Tibial artery (tissue), 4 donors: ENCODE measurements at regions of chr15 and their contacts with region 1.

Region 1: GRCh38 chr15:71114896-71115554 is at the start of gene THSD4:
- DNase-seq: peak; percentile 52 to 80
- H3K4me3 ChIP-seq: peak within 1 kb of the TSS; percentile 66 to 70
- H3K27ac ChIP-seq: peak within 1 kb of the TSS; percentile 83 to 84
- H3K4me1 ChIP-seq: peaks cover 0 to 27% (median 8%) of the 10 kb centered on the region in 4 donors
- H3K27me3 ChIP-seq: no peaks in the 10 kb centered on the region
- CTCF ChIP-seq: peak; percentile 98

Region 2: DNA sequence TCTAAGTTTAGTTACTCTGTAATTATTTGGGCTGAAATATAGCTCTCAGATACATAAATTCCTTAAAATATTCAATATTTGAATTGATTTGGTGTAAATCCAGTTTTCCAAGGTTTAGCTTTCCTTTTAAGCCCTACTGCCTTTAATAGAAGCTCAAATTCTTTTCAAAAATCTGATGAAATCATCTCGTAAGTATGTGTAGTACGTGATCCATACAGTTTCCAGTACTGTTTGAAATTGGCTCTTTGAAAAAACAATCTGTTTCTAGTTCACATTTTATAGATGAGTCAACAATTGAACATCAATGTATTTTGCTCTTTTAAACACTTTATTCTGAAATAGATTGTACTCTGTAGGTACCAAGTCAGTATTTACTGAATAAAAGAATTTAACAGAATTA is 138.2 kb before region 1 on chr15:
- intact Hi-C with region 1: no loop called
- DNase-seq: no peak
- H3K4me3 ChIP-seq: no peak overlapping the region
- H3K27ac ChIP-seq: no peak overlapping the region
- H3K4me1 ChIP-seq: peaks cover 0 to 10% (median 2%) of the 10 kb centered on the region in 4 donors
- H3K27me3 ChIP-seq: no peaks in the 10 kb centered on the region
- CTCF ChIP-seq: no peak

Region 3: DNA sequence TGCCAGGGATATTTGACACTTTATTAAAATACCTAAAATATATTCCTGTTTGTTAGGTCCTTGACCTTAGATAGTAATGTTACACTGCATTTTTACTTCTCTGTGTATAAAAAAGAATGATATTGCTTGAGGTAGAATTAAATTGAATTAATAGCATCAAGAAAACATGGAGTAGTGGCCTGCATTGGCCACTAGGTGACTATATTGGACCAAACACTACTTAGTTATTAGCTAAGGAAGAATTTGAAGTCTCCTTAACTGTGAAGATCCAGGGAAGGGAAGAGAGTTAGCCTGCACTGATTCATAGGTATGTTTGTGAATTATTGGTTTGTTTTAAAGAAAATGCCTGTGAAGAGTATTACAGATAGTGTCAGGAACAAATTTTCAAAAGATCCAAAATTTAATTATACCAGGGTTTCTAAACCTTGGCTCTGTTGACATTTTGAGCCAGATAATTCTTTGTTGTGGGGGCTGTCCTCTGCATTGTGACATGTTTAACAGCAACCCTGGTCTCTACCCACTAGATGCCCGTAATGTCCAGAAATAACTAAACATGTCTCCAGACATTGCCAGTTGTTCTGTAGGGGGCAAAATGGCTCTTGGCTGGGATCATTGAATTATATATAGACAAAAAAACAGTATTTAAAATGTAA is 103.4 kb before region 1 on chr15:
- intact Hi-C with region 1: loop called (anchors 10 kb)
- DNase-seq: no peak
- H3K4me3 ChIP-seq: no peak overlapping the region
- H3K27ac ChIP-seq: no peak overlapping the region
- H3K4me1 ChIP-seq: no peaks in the 10 kb centered on the region
- H3K27me3 ChIP-seq: no peaks in the 10 kb centered on the region
- CTCF ChIP-seq: peak; percentile 80 to 81

Region 4: GRCh38 chr15:71435552-71435951 is 320.5 kb after region 1 on chr15:
- intact Hi-C with region 1: loop called (anchors 2 kb)
- DNase-seq: no peak
- H3K4me3 ChIP-seq: no peak overlapping the region
- H3K27ac ChIP-seq: peak overlapping the region; percentile 47 to 48
- H3K4me1 ChIP-seq: peaks cover 0 to 22% (median 1%) of the 10 kb centered on the region in 4 donors
- H3K27me3 ChIP-seq: no peaks in the 10 kb centered on the region
- CTCF ChIP-seq: no peak

Region 5: DNA sequence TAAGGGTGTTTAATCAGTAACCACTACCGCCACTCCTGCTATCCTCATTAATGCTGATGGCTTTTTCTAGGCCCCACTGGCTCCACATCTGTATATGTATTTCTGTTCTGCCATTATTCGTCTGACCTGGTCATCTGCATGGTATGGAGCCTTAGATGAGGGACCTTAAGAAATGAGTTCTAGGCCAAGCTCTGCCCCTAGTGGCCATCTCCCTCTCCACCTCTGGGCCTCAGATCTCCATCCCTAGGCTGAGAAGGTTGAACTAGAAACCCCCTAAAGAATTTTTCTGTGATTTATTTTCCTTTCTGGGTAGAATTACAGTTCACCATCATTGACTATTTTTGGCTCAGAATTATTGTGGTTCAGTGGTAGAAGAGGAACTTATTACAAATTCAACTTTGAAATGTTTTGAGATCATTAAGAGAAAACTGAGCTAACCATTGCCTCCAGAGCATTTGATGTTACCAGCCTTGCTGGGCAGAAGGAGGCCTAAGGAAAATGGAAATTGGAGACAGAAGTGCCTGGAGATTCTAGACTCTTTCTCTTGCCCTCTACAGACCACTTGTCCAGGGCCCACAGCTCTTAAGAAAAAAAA is 370.2 kb after region 1 on chr15:
- intact Hi-C with region 1: no loop called
- DNase-seq: no peak
- H3K4me3 ChIP-seq: no peak overlapping the region
- H3K27ac ChIP-seq: no peak overlapping the region
- H3K4me1 ChIP-seq: peaks cover 0 to 3% (median 0%) of the 10 kb centered on the region in 4 donors
- H3K27me3 ChIP-seq: no peaks in the 10 kb centered on the region
- CTCF ChIP-seq: no peak

Region 6: DNA sequence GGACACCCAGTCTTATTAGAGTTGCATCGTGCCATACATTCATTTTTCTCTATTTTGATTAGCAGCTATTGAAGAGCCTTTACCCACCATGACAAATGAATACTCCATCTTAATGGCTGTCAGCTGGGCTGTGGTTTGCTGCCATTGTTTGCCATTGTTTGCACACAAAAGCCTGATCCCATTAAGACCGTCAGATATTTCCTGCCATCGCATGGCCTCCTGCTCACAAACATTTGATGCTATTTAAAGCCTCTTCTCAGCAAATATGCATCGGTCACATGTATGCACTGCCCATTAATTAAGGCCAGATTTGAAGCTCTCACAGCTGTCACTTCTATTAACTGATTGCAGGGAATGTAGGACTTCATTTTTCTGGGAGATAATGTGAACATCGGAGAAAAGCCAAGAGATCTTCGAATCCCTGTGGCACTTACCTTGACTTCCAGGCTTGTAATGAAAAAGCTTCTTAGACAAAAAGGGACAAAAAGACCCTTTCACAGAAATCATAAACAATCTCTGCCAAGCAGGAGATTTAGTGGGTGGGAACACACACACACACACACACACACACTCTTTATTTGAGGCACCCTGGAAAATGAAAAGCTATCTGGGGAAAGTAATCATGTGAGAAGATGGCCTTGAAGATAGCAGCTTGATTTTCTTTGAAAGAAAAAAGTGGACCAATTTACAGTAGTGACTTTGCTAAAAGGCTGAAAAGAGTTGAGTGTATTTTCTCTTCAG is 520.0 kb after region 1 on chr15:
- intact Hi-C with region 1: no loop called
- DNase-seq: no peak
- H3K4me3 ChIP-seq: no peak overlapping the region
- H3K27ac ChIP-seq: no peak overlapping the region
- H3K4me1 ChIP-seq: no peaks in the 10 kb centered on the region
- H3K27me3 ChIP-seq: no peaks in the 10 kb centered on the region
- CTCF ChIP-seq: no peak